ENCODE measurements at regions of chr21 and their contacts with region 1.

Region 1: DNA sequence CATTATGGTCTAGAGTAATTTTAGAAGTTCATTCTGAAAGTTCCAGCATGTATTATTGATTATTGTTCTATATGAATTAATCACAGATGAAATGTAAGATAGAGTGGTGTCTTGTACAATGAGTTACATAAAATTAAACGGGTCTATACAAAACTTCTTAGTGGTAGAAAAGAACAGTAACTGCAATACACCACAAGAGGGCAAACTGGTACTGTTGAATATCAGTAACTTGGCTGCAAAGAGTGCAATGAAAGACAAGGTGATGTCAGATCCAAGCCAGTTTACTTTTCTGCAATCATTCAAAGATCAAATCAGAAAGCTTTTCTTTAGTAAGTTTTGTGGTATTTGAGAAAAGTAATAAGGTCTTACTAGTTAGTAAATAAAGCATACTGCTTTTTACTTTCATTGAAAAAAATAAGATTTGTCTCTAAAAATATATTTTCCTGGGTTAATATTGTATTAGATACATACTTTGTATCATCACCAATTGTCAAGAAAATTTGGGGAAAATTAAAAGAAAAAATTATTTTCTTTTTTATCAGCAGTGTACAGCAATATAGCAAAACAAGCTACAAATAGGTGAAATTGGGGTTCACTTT is 66.4 kb upstream of the BTG3 start:
- DNase-seq: peak in 1 of 2 experiments; percentile 57
- H3K4me3 ChIP-seq: no peak overlapping the region
- H3K4me3 Mint-ChIP-seq: no peak overlapping the region
- H3K27ac Mint-ChIP-seq: no peak overlapping the region
- H3K4me1 ChIP-seq: no peaks in the 10 kb centered on the region
- H3K4me1 Mint-ChIP-seq: no peaks in the 10 kb centered on the region
- H3K27me3 ChIP-seq: no peaks in the 10 kb centered on the region
- H3K27me3 Mint-ChIP-seq: no peaks in the 10 kb centered on the region
- CTCF ChIP-seq: peak; percentile 66 to 85

Region 2: GRCh38 chr21:17387030-17387617 is 292.0 kb before region 1 on chr21:
- CTCF ChIA-PET with region 1: no interaction called
- POLR2A ChIA-PET with region 1: no interaction called
- intact Hi-C with region 1: loop called (anchors 5 kb)
- DNase-seq: peak in 1 of 2 experiments; percentile 72
- H3K4me3 ChIP-seq: no peak overlapping the region
- H3K4me3 Mint-ChIP-seq: no peak overlapping the region
- H3K27ac Mint-ChIP-seq: no peak overlapping the region
- H3K4me1 ChIP-seq: no peaks in the 10 kb centered on the region; the same call in 1 of the 2 replicates
- H3K4me1 Mint-ChIP-seq: peaks cover 5% of the 10 kb centered on the region
- H3K27me3 ChIP-seq: no peaks in the 10 kb centered on the region
- H3K27me3 Mint-ChIP-seq: no peaks in the 10 kb centered on the region
- CTCF ChIP-seq: peak; percentile 40 to 82

Region 3: GRCh38 chr21:17834639-17835354 is 155.7 kb after region 1 on chr21:
- CTCF ChIA-PET with region 1: no interaction called
- POLR2A ChIA-PET with region 1: interaction called, 19 read pairs
- intact Hi-C with region 1: no loop called
- DNase-seq: no peak
- H3K4me3 ChIP-seq: no peak overlapping the region
- H3K4me3 Mint-ChIP-seq: no peak overlapping the region
- H3K27ac Mint-ChIP-seq: no peak overlapping the region
- H3K4me1 ChIP-seq: no peaks in the 10 kb centered on the region
- H3K4me1 Mint-ChIP-seq: no peaks in the 10 kb centered on the region
- H3K27me3 ChIP-seq: no peaks in the 10 kb centered on the region
- H3K27me3 Mint-ChIP-seq: peaks cover 6% of the 10 kb centered on the region
- CTCF ChIP-seq: no peak

Region 4: DNA sequence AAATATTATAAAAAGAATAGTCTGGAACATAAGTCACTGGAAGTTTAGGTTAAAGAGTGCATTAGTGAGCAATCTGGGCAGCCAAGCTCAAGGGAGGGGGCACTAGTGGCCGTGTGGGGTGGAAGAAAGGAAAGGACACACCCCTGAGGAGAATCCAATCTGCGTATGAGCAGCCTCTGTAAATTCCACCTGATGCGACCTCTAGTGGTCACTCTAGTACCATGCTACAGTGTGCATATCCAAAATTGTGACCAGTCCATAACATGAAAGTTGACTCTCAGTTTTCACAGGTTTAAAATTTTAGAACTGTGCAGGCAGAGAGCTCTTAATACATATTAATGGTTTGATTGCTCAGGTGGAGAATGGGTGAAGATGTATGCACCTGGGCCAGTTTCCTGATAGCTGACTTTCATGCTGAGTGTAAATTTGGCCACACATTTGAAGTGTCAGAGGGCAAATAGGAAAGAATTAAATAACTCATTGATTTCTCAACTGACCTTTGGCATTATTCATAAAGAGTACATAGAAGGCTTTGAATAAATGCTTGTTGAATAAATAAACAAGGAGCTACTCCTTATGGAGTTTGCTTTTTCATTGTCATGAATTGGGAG is 246.0 kb after region 1 on chr21:
- CTCF ChIA-PET with region 1: interaction called, 5 read pairs
- POLR2A ChIA-PET with region 1: no interaction called
- intact Hi-C with region 1: loop called (anchors 1 kb)
- DNase-seq: peak; percentile 65 to 68
- H3K4me3 ChIP-seq: no peak overlapping the region
- H3K4me3 Mint-ChIP-seq: no peak overlapping the region
- H3K27ac Mint-ChIP-seq: no peak overlapping the region
- H3K4me1 ChIP-seq: no peaks in the 10 kb centered on the region
- H3K4me1 Mint-ChIP-seq: peaks cover 6% of the 10 kb centered on the region
- H3K27me3 ChIP-seq: no peaks in the 10 kb centered on the region
- H3K27me3 Mint-ChIP-seq: peaks cover 6% of the 10 kb centered on the region
- CTCF ChIP-seq: peak; percentile 69 to 87

Region 5: GRCh38 chr21:18369115-18369514 is 690.0 kb after region 1 on chr21:
- CTCF ChIA-PET with region 1: no interaction called
- POLR2A ChIA-PET with region 1: no interaction called
- intact Hi-C with region 1: loop called (anchors 5 kb)
- DNase-seq: peak in 1 of 2 experiments; percentile 9
- H3K4me3 ChIP-seq: no peak overlapping the region
- H3K4me3 Mint-ChIP-seq: no peak overlapping the region
- H3K27ac Mint-ChIP-seq: no peak overlapping the region
- H3K4me1 ChIP-seq: no peaks in the 10 kb centered on the region
- H3K4me1 Mint-ChIP-seq: no peaks in the 10 kb centered on the region
- H3K27me3 ChIP-seq: no peaks in the 10 kb centered on the region
- H3K27me3 Mint-ChIP-seq: peaks cover 4% of the 10 kb centered on the region
- CTCF ChIP-seq: peak in 1 of 2 experiments; percentile 54